ENCODE measurements at regions of chr11 and their contacts with region 1.

Region 1: DNA sequence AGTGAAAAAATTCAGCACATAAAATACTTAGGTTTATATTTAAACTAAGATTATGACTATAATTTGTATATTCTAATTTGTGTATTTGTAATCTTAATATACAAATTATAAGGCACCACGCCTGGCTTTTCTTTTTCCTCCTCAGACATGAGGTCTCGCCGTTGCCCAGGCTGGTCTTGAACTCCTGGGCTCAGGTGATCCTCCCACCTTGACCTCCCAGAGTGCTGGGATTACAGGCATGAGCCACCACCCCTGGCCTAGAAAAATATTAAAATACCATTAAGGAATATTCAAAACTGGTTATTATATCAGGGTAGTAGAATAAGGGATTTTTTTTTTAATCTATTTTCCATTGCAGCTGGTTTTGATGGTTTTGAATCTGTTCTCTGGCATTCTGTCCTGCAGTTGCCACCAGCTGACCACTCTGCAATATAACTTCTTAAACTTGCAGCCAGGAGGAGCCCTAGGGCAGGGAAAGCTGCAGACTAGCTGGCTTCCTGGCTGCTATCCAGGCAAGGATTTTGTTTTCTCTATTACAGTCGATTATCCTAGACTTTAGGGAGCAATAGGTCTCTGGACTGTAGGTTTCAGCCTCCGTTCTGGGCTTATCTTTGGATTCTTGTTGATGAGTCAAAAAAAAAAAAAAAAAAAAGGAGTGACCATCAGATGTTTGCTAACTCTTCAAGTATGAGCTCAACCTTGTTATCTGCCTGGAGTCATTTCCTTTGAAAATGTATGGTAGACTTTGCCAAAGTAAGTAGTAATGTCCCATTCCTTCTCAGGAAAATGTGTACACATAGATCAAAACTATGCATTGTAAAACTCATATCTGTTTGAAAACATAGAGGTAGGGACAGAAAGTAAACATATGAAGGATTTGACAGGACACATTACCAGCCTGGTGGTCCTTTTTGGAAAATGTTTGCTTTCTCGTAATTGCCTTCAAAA is 13.2 kb downstream of the POLA2 start:
- DNase-seq: peak in 9 of 10 donors; percentile 29 to 94 (median 68)

Region 2: GRCh38 chr11:65314501-65315203 is 39.6 kb after region 1 on chr11 and contains the start of gene CDC42EP2:
- intact Hi-C with region 1: loop called (anchors 1 kb)
- DNase-seq: peak; percentile 76 to 98 (median 85)

Region 3: GRCh38 chr11:65329944-65330403 is 55.0 kb after region 1 on chr11:
- intact Hi-C with region 1: loop called (anchors 1 kb)
- DNase-seq: peak in 7 of 10 donors; percentile 79 to 93 (median 85)

Measured in posterior cingulate gyrus (tissue), 11 donors.